Heart left ventricle (tissue), 16 donors: ENCODE measurements at regions of chr3 and their contacts with region 1.

Region 1: DNA sequence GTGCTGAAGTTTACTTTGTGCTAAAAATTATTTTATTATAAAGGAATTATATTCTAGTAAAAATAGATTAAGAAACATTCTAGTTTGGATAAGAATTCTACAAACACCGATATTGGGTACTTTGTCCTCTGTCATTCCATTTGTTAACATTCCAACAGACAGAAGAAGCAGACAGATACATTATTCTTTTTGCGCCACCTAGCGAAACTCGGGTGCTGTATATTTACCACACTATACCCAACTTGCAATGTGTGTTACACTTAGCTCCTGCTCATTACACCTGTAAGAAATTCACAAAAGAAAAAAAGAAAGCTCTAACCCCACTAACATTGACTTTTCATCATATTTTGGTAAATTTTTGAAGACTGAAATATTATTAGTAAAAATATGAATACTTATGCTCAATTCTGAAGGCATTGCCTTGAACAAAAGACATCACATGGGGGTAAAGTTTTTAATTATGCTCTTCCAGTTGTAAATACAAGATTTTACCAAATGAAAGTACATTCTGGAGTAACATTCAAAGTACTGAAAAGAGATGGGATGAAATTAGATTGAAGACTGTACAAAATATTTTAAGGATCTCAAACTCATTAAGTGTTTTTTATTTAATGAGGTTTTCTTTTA is 136.5 kb upstream of the MLF1 start:
- DNase-seq: peak in 4 of 5 donors; percentile 31 to 52 (median 37)
- ATAC-seq: peak in 3 of 4 donors; percentile 78 to 83 (median 79)
- H3K4me3 ChIP-seq: no peak overlapping the region
- H3K27ac ChIP-seq: no peak overlapping the region
- H3K4me1 ChIP-seq: no peaks in the 10 kb centered on the region
- H3K27me3 ChIP-seq: no peaks in the 10 kb centered on the region
- CTCF ChIP-seq: peak; percentile 33 to 87 (median 72)
- POLR2A ChIP-seq: no peak

Region 2: GRCh38 chr3:157532529-157533297 is 901.8 kb before region 1 on chr3:
- intact Hi-C with region 1: loop called in 1 of 10 experiments (anchors 10 kb)
- DNase-seq: peak in 1 of 5 donors; percentile 28
- ATAC-seq: peak; percentile 33 to 90 (median 82)
- H3K4me3 ChIP-seq: no peak overlapping the region
- H3K27ac ChIP-seq: peak overlapping the region in 1 of 12 donors; percentile 22
- H3K4me1 ChIP-seq: peaks cover 0 to 8% (median 0%) of the 10 kb centered on the region in 12 donors
- H3K27me3 ChIP-seq: no peaks in the 10 kb centered on the region
- CTCF ChIP-seq: peak; percentile 52 to 78 (median 64)
- POLR2A ChIP-seq: no peak

Region 3: GRCh38 chr3:158097593-158098308 is 336.8 kb before region 1 on chr3:
- intact Hi-C with region 1: loop called in 5 of 10 experiments (anchors 10 kb)
- DNase-seq: peak in 4 of 5 donors; percentile 25 to 71 (median 40)
- ATAC-seq: peak in 3 of 4 donors; percentile 59 to 79 (median 69)
- H3K4me3 ChIP-seq: peak overlapping the region in 11 of 12 donors; percentile 24 to 59 (median 43)
- H3K27ac ChIP-seq: no peak overlapping the region
- H3K4me1 ChIP-seq: peaks cover 0 to 23% (median 8%) of the 10 kb centered on the region in 12 donors
- H3K27me3 ChIP-seq: peaks cover 74 to 100% (median 96%) of the 10 kb centered on the region in 9 donors
- CTCF ChIP-seq: no peak
- POLR2A ChIP-seq: no peak

Region 4: DNA sequence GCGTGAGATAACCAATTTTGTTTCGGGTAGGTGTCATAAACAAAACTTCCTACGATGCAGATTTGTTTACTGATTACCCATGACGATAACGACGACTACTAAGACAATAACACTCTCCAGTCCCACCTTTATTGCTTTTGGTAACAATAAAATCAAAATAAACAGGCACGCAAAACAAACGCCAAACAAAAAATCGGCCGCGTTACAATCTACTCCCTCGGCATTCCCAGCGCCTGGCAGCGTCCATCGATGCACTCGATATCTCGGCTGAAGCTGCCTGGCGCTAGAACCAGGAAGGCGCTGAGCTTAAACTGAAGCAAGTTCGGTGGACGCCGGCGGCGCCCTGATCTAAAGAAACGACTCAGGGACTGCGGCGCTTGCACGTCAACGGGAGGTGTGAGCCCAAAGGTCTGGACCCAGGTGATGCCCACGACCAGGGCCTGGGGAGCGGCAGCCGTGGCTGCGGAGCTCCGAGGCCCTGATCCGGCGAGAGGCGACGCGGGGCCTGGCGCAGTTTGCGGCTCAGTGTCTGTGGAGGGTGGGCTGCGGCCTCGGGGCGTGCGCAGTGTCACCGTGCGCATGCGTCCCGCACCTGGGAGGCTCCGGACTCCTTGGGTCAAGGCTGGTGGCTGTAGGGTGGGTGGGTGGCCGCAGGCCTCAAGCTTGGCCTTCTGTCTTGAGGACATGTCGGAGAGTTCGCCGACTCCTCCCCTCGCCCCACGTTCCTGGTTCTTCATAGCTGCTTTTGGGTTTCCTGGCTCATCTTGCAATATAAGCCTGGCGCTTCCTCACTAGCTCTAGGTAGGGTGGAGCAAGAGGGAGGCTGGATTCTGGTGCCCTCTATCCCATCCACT is 324.5 kb before region 1 on chr3 and contains the start of gene RSRC1:
- intact Hi-C with region 1: loop called in 1 of 10 experiments (anchors 10 kb)
- DNase-seq: peak; percentile 84 to 89 (median 87)
- ATAC-seq: peak; percentile 74 to 97 (median 94)
- H3K4me3 ChIP-seq: peak within 1 kb of the TSS; percentile 72 to 95 (median 84)
- H3K27ac ChIP-seq: peak within 1 kb of the TSS in 11 of 12 donors; percentile 23 to 81 (median 72)
- H3K4me1 ChIP-seq: peaks cover 0 to 46% (median 16%) of the 10 kb centered on the region in 12 donors
- H3K27me3 ChIP-seq: peaks cover 18 to 45% (median 39%) of the 10 kb centered on the region in 9 donors
- CTCF ChIP-seq: no peak
- POLR2A ChIP-seq: peak in 1 of 2 donors; percentile 22
- total RNA-seq, gene RSRC1: 15.7 to 24.9 (median 21.9) TPM

Region 5: DNA sequence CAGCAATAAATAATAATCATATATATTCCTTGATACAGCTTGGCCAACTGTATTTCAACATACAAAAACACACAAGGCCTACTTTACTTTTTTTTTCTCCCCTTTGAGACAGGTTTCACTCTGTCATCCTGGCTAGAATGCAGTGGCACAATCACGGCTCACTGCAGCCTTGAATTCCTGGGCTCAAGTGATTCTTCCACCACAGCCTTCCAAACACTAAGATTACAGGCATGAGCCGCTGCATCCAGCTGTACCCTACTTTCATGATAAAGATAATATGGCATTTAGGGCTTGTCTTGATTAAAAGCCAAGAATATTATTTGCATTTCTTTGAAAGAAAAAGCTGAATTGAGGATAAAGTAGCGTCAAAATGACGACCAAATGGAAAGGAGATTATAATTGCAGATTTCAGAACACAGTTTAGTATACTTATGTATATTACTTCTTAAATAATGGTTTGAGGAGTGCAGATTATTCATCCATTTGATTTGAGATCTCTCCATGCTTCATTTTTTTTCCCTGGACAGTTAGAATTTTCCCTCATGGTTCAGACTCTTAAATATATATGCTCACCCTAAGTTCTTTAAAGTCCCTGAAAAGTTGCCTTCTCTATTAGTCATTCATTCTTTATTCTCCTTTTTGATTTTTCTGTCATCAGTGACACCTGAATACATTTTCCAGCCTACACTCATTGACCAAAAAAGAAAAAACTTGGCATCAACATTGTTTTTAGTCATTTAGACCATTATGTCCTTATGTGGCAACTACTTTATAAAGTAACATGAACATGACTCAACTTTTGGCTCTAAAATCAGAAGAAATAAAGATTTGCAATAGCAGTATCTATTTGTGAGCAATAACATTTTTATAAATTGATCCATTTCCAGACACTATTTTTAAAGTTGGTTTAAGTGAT is 88.0 kb after region 1 on chr3:
- intact Hi-C with region 1: loop called in 1 of 10 experiments (anchors 10 kb)
- DNase-seq: no peak
- ATAC-seq: no peak
- H3K4me3 ChIP-seq: no peak overlapping the region
- H3K27ac ChIP-seq: no peak overlapping the region
- H3K4me1 ChIP-seq: peaks cover 0 to 16% (median 0%) of the 10 kb centered on the region in 12 donors
- H3K27me3 ChIP-seq: no peaks in the 10 kb centered on the region
- CTCF ChIP-seq: no peak
- POLR2A ChIP-seq: no peak

Region 6: GRCh38 chr3:158539414-158540014 is 105.0 kb after region 1 on chr3:
- intact Hi-C with region 1: no loop called
- DNase-seq: peak in 1 of 5 donors; percentile 7
- ATAC-seq: peak in 1 of 4 donors; percentile 50
- H3K4me3 ChIP-seq: no peak overlapping the region
- H3K27ac ChIP-seq: no peak overlapping the region
- H3K4me1 ChIP-seq: no peaks in the 10 kb centered on the region
- H3K27me3 ChIP-seq: no peaks in the 10 kb centered on the region
- CTCF ChIP-seq: peak; percentile 37 to 70 (median 61)
- POLR2A ChIP-seq: no peak